ENCODE measurements at regions of chr12 and their contacts with region 1.

Region 1: GRCh38 chr12:98618952-98619351 is 25.5 kb downstream of the SLC25A3 start:
- DNase-seq: no peak
- CTCF ChIP-seq: no peak

Region 2: GRCh38 chr12:98635657-98636323 is 16.8 kb after region 1 on chr12:
- CTCF ChIA-PET with region 1: interaction called, 12 read pairs
- POLR2A ChIA-PET with region 1: no interaction called
- DNase-seq: peak; percentile 56
- CTCF ChIP-seq: no peak

Region 3: GRCh38 chr12:98660521-98660920 is 41.6 kb after region 1 on chr12:
- CTCF ChIA-PET with region 1: no interaction called
- POLR2A ChIA-PET with region 1: no interaction called
- DNase-seq: no peak
- CTCF ChIP-seq: no peak

Measured in GM10248 (cell line).